CD4-positive, alpha-beta memory T cell (primary cell): ENCODE measurements at regions of chr15 and their contacts with region 1.

Region 1: DNA sequence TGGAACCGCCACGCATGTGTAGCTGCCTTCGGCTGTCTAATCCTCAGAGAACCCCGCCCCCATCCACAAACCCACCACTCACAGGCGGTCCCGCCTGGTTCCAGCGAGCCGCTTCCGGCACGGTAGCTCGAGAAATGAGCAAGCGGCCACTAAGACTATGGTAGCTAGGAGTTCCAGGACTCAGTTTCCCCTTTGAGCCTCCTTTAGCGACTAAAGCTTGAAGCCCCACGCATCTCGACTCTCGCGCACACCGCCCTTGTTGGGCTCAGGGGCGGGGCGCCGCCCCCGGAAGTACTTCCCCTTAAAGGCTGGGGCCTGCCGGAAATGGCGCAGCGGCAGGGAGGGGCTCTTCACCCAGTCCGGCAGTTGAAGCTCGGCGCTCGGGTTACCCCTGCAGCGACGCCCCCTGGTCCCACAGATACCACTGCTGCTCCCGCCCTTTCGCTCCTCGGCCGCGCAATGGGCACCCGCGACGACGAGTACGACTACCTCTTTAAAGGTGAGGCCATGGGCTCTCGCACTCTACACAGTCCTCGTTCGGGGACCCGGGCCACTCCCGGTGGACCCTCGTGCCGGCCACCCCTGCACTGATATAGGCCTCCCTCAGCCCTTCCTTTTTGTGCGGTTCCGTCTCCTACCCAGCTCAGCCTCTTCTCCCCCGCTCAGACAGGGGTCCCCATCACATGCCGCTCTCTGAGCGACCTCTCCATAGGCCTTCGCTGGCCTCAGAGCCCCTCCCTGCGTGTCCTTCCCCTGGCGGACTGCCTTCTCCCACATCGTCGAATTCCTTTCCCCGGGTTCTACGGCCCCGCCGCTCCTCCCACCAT is at the start of gene RAB11A:
- DNase-seq: peak; percentile 96 to 97 (median 96)
- H3K4me3 ChIP-seq: peak within 1 kb of the TSS; percentile 92 to 99
- H3K4me3 Mint-ChIP-seq: peak within 1 kb of the TSS; percentile 95 to 100 (median 98)
- H3K27ac ChIP-seq: peak within 1 kb of the TSS; percentile 89
- H3K27ac Mint-ChIP-seq: peak within 1 kb of the TSS; percentile 98 to 100 (median 99)
- H3K4me1 ChIP-seq: peaks cover 40% of the 10 kb centered on the region
- H3K4me1 Mint-ChIP-seq: peaks cover 14 to 45% (median 26%) of the 10 kb centered on the region in 4 donors
- H3K27me3 ChIP-seq: no peaks in the 10 kb centered on the region
- H3K27me3 Mint-ChIP-seq: peaks cover 0 to 5% of the 10 kb centered on the region in 2 donors
- total RNA-seq, gene RAB11A: 84.7 to 95.8 TPM

Region 2: GRCh38 chr15:65516997-65517865 is 352.1 kb before region 1 on chr15 and contains the start of gene DPP8:
- CTCF ChIA-PET with region 1: interaction called, 3 read pairs
- POLR2A ChIA-PET with region 1: interaction called, 9 read pairs
- intact Hi-C with region 1: loop called (anchors 1 kb)
- DNase-seq: peak; percentile 92 to 93 (median 92)
- H3K4me3 ChIP-seq: peak within 1 kb of the TSS; percentile 86 to 96
- H3K4me3 Mint-ChIP-seq: peak within 1 kb of the TSS; percentile 85 to 100 (median 95)
- H3K27ac ChIP-seq: peak within 1 kb of the TSS; percentile 85
- H3K27ac Mint-ChIP-seq: peak within 1 kb of the TSS; percentile 82 to 97 (median 97)
- H3K4me1 ChIP-seq: peaks cover 52% of the 10 kb centered on the region
- H3K4me1 Mint-ChIP-seq: peaks cover 23 to 53% (median 38%) of the 10 kb centered on the region in 4 donors
- H3K27me3 ChIP-seq: no peaks in the 10 kb centered on the region
- H3K27me3 Mint-ChIP-seq: no peaks in the 10 kb centered on the region
- total RNA-seq, gene DPP8: 54.0 to 58.6 TPM

Region 3: DNA sequence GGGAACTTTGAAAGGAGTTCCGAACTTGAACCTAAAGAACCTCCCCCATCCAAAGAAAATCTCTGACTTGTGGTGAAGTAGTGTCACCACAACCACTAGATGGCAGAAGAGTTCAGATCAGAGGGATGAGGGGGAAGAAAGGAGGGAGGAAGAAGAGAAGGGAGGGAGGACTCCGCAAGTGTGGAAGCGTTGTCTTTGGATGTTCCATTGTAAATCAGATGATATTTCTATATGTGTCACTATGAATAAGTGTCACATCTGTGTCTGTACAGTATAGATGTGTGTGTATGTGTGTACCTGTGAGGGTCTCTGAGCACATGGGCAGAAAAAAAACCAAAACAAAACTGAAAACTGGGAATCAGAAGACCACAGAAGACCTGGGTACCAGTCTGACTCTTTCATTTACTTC is 230.7 kb before region 1 on chr15:
- CTCF ChIA-PET with region 1: interaction called, 11 read pairs
- POLR2A ChIA-PET with region 1: interaction called, 4 read pairs
- intact Hi-C with region 1: no loop called
- DNase-seq: peak; percentile 56 to 73 (median 70)
- H3K4me3 ChIP-seq: no peak overlapping the region
- H3K4me3 Mint-ChIP-seq: peak overlapping the region in 4 of 8 donors; percentile 2 to 32 (median 6)
- H3K27ac ChIP-seq: no peak overlapping the region
- H3K27ac Mint-ChIP-seq: peak overlapping the region in 3 of 7 donors; percentile 0 to 38 (median 1)
- H3K4me1 ChIP-seq: peaks cover 8% of the 10 kb centered on the region
- H3K4me1 Mint-ChIP-seq: peaks cover 8 to 16% (median 9%) of the 10 kb centered on the region in 4 donors
- H3K27me3 ChIP-seq: no peaks in the 10 kb centered on the region
- H3K27me3 Mint-ChIP-seq: no peaks in the 10 kb centered on the region

Region 4: GRCh38 chr15:65660927-65661326 is 208.4 kb before region 1 on chr15:
- CTCF ChIA-PET with region 1: no interaction called
- POLR2A ChIA-PET with region 1: no interaction called
- intact Hi-C with region 1: no loop called
- DNase-seq: no peak
- H3K4me3 ChIP-seq: no peak overlapping the region
- H3K4me3 Mint-ChIP-seq: no peak overlapping the region
- H3K27ac ChIP-seq: no peak overlapping the region
- H3K27ac Mint-ChIP-seq: no peak overlapping the region
- H3K4me1 ChIP-seq: no peaks in the 10 kb centered on the region
- H3K4me1 Mint-ChIP-seq: no peaks in the 10 kb centered on the region
- H3K27me3 ChIP-seq: no peaks in the 10 kb centered on the region
- H3K27me3 Mint-ChIP-seq: no peaks in the 10 kb centered on the region

Region 5: GRCh38 chr15:65818927-65819562 is 50.3 kb before region 1 on chr15:
- CTCF ChIA-PET with region 1: interaction called, 3 read pairs
- POLR2A ChIA-PET with region 1: interaction called, 20 read pairs
- intact Hi-C with region 1: no loop called
- DNase-seq: peak; percentile 69 to 93 (median 89)
- H3K4me3 ChIP-seq: peak overlapping the region in 1 of 2 donors; percentile 17
- H3K4me3 Mint-ChIP-seq: peak overlapping the region; percentile 32 to 77 (median 74)
- H3K27ac ChIP-seq: peak overlapping the region; percentile 85
- H3K27ac Mint-ChIP-seq: peak overlapping the region; percentile 90 to 99 (median 96)
- H3K4me1 ChIP-seq: peaks cover 62% of the 10 kb centered on the region
- H3K4me1 Mint-ChIP-seq: peaks cover 35 to 63% (median 50%) of the 10 kb centered on the region in 4 donors
- H3K27me3 ChIP-seq: no peaks in the 10 kb centered on the region
- H3K27me3 Mint-ChIP-seq: no peaks in the 10 kb centered on the region

Region 6: GRCh38 chr15:65856821-65857455 is 12.4 kb before region 1 on chr15:
- CTCF ChIA-PET with region 1: interaction called, 23 read pairs
- POLR2A ChIA-PET with region 1: interaction called, 4 read pairs
- intact Hi-C with region 1: no loop called
- DNase-seq: peak; percentile 76 to 84 (median 77)
- H3K4me3 ChIP-seq: no peak overlapping the region
- H3K4me3 Mint-ChIP-seq: peak overlapping the region in 1 of 8 donors; percentile 32
- H3K27ac ChIP-seq: no peak overlapping the region
- H3K27ac Mint-ChIP-seq: peak overlapping the region in 4 of 7 donors; percentile 10 to 88 (median 49)
- H3K4me1 ChIP-seq: no peaks in the 10 kb centered on the region
- H3K4me1 Mint-ChIP-seq: peaks cover 9 to 13% (median 10%) of the 10 kb centered on the region in 4 donors
- H3K27me3 ChIP-seq: no peaks in the 10 kb centered on the region
- H3K27me3 Mint-ChIP-seq: no peaks in the 10 kb centered on the region

Region 7: DNA sequence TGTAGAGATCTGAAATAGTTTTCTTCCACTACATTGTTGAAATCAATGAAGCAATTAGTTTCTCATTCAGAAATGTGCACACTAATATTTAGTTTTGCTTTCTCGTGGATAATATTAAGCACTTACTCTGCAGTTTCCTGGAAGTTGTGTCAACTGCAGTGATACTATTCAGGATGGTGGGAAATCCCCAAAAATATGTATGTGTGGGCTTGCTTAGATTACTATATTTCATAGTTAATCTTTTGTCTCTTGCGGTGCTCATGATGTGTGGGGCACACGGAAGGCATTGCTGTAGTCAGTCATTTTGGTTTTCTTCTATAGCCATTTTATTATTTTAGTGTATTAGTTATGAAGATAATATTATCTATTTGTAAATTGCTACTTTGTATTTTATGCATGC is 19.6 kb after region 1 on chr15:
- CTCF ChIA-PET with region 1: interaction called, 6 read pairs
- POLR2A ChIA-PET with region 1: interaction called, 8 read pairs
- intact Hi-C with region 1: loop called (anchors 2 kb)
- DNase-seq: no peak
- H3K4me3 ChIP-seq: no peak overlapping the region
- H3K4me3 Mint-ChIP-seq: peak overlapping the region in 2 of 8 donors; percentile 18 to 23
- H3K27ac ChIP-seq: peak overlapping the region; percentile 10
- H3K27ac Mint-ChIP-seq: peak overlapping the region in 6 of 7 donors; percentile 42 to 92 (median 72)
- H3K4me1 ChIP-seq: peaks cover 49% of the 10 kb centered on the region
- H3K4me1 Mint-ChIP-seq: peaks cover 31 to 72% (median 51%) of the 10 kb centered on the region in 4 donors
- H3K27me3 ChIP-seq: no peaks in the 10 kb centered on the region
- H3K27me3 Mint-ChIP-seq: no peaks in the 10 kb centered on the region

Region 8: DNA sequence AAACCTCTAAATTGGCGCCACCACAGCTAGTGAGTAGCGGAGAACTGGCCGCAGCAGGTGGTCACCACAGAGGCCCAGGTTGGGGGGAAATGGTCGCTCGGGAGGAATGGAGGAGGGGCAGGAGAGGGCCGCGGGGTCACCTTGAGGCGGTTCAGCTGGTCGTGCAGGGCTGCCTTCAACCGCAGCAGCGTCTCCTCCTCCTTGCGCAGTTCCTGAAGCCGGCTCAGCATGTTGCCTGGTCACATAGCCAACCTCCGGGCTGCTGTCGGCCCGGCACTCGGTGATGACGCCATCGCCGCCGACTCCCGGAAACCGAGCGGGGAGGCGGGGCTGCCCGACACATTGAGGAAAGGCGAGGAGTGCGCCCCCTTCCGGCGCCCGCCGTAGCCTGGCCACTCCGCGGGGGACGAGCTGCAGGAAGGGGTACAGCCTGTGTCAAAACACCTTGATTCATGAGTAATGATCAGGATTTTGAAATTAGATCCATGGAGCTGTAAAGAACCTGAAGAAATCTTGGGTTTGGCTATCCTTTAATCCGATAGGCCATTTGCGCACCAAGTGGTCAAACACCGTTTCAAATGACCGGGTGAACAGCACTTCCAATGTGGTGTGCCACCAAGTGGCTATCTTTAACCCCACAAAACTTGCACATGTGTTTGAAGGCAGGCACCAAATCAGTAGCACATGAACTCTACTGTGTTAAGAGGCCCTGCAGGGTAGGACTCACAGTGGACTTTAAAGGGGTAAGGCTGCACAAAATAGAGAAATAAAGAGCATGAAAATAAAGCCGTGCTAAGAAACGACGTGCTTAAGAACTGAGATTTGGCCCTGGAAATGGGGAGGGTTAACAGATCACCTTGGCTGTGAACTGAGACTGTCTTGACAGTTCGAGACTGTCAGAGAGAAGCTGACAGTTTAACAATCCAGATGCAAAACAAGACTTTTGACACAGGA is 628.4 kb after region 1 on chr15 and contains the start of gene SNAPC5:
- CTCF ChIA-PET with region 1: no interaction called
- POLR2A ChIA-PET with region 1: no interaction called
- intact Hi-C with region 1: loop called (anchors 2 kb)
- DNase-seq: peak; percentile 96 to 97 (median 96)
- H3K4me3 ChIP-seq: peak within 1 kb of the TSS; percentile 86 to 90
- H3K4me3 Mint-ChIP-seq: peak within 1 kb of the TSS; percentile 95 to 98 (median 97)
- H3K27ac ChIP-seq: peak within 1 kb of the TSS; percentile 89
- H3K27ac Mint-ChIP-seq: peak within 1 kb of the TSS; percentile 96 to 99 (median 99)
- H3K4me1 ChIP-seq: peaks cover 50% of the 10 kb centered on the region
- H3K4me1 Mint-ChIP-seq: peaks cover 30 to 75% (median 50%) of the 10 kb centered on the region in 4 donors
- H3K27me3 ChIP-seq: no peaks in the 10 kb centered on the region
- H3K27me3 Mint-ChIP-seq: no peaks in the 10 kb centered on the region
- total RNA-seq, gene SNAPC5: 32.5 to 36.6 TPM